ENCODE measurements at regions of chr3 and their contacts with region 1.

Region 1: DNA sequence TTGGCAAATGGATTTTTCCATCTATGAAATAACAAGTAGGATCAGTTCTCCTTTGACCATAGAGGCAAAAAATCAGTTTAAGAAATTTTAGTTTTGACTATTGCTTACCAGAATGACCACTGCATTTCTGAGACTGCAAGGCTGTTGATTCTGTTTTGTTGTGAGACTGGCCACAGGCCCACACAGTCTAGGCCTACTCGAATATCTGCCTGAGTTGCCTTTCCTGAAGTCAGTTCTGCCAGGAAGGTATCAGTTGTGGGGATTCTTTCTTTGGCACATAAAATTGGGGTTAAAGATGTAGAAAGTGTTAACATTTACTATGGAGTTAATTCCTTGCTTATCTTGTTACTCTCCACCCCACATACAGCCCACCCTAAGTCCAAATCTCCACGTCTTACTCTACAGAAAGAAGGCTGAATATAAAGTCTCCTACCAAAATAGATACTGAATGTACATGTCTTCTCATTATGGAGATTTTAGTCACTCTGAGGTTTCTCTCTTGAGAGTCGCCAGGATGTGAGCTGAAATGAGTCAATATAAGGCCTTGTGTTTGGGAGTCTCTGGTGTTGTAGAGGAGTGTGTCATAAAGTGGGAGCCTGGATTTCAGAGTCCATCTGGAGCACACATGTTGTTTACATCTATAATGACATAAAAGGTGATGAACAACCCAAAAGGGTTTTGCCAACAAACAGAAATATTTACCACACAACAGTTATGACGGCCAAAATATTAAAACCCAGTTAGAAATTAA is 45.0 kb upstream of the WWTR1 start:
- DNase-seq: peak; percentile 15
- ATAC-seq: peak; percentile 66
- H3K4me3 Mint-ChIP-seq: no peak overlapping the region
- H3K27ac Mint-ChIP-seq: peak overlapping the region; percentile 61
- H3K4me1 Mint-ChIP-seq: peaks cover 23% of the 10 kb centered on the region
- H3K27me3 Mint-ChIP-seq: no peaks in the 10 kb centered on the region

Region 2: DNA sequence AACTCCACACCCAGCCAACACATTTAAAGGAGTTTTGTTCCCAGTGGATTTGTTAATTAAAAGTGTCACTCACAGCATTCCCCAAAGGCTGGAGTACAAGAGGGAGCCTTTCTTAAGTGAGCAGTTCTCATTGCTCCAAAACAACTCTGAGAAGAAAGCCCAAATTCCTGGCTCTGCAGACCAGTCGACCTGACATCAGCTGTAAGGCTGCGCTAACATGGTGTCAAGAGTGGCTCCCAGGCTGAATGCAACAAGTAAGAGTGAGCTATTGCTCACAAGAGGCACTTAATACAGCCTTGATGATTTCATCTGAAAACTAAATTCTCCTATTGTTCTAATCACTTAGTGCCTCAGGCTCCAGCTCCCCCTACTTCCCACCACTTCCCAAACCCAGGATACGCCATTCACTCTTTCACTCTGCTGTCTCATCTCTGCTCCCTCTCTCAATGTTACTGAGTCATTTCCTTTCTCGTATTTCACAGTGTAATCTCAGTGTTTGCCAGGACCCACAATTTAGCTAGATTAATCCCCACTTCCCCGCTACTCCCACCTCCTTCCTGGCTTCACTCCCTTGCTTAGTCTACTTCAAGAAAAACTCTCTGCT is 126.8 kb before region 1 on chr3:
- CTCF ChIA-PET with region 1: no interaction called
- POLR2A ChIA-PET with region 1: no interaction called
- intact Hi-C with region 1: loop called (anchors 1 to 2 kb)
- DNase-seq: peak; percentile 19
- ATAC-seq: peak; percentile 54
- H3K4me3 Mint-ChIP-seq: no peak overlapping the region
- H3K27ac Mint-ChIP-seq: no peak overlapping the region
- H3K4me1 Mint-ChIP-seq: peaks cover 39% of the 10 kb centered on the region
- H3K27me3 Mint-ChIP-seq: peaks cover 3% of the 10 kb centered on the region

Region 3: GRCh38 chr3:149581681-149582370 is 121.0 kb before region 1 on chr3:
- CTCF ChIA-PET with region 1: no interaction called
- POLR2A ChIA-PET with region 1: no interaction called
- intact Hi-C with region 1: loop called in 1 of 2 experiments (anchors 2 kb)
- DNase-seq: peak; percentile 11
- ATAC-seq: no peak
- H3K4me3 Mint-ChIP-seq: no peak overlapping the region
- H3K27ac Mint-ChIP-seq: no peak overlapping the region
- H3K4me1 Mint-ChIP-seq: peaks cover 22% of the 10 kb centered on the region
- H3K27me3 Mint-ChIP-seq: peaks cover 22% of the 10 kb centered on the region

Region 4: GRCh38 chr3:149621218-149622005 is 81.5 kb before region 1 on chr3:
- CTCF ChIA-PET with region 1: no interaction called
- POLR2A ChIA-PET with region 1: no interaction called
- intact Hi-C with region 1: loop called (anchors 1 kb)
- DNase-seq: peak; percentile 11
- ATAC-seq: peak; percentile 73
- H3K4me3 Mint-ChIP-seq: no peak overlapping the region
- H3K27ac Mint-ChIP-seq: no peak overlapping the region
- H3K4me1 Mint-ChIP-seq: peaks cover 14% of the 10 kb centered on the region
- H3K27me3 Mint-ChIP-seq: peaks cover 16% of the 10 kb centered on the region

Region 5: GRCh38 chr3:149717391-149718056 is 14.7 kb after region 1 on chr3:
- CTCF ChIA-PET with region 1: interaction called, 11 read pairs
- POLR2A ChIA-PET with region 1: no interaction called
- intact Hi-C with region 1: no loop called
- DNase-seq: peak; percentile 49
- ATAC-seq: no peak
- H3K4me3 Mint-ChIP-seq: no peak overlapping the region
- H3K27ac Mint-ChIP-seq: no peak overlapping the region
- H3K4me1 Mint-ChIP-seq: no peaks in the 10 kb centered on the region
- H3K27me3 Mint-ChIP-seq: no peaks in the 10 kb centered on the region

Region 6: GRCh38 chr3:149726716-149727407 is 24.0 kb after region 1 on chr3:
- CTCF ChIA-PET with region 1: interaction called, 3 read pairs
- POLR2A ChIA-PET with region 1: no interaction called
- intact Hi-C with region 1: loop called in 1 of 2 experiments (anchors 2 kb)
- DNase-seq: peak; percentile 35
- ATAC-seq: peak; percentile 97
- H3K4me3 Mint-ChIP-seq: no peak overlapping the region
- H3K27ac Mint-ChIP-seq: no peak overlapping the region
- H3K4me1 Mint-ChIP-seq: peaks cover 5% of the 10 kb centered on the region
- H3K27me3 Mint-ChIP-seq: peaks cover 4% of the 10 kb centered on the region

Region 7: GRCh38 chr3:149738876-149739275 is 36.0 kb after region 1 on chr3:
- CTCF ChIA-PET with region 1: no interaction called
- POLR2A ChIA-PET with region 1: no interaction called
- intact Hi-C with region 1: no loop called
- DNase-seq: no peak
- ATAC-seq: peak; percentile 72
- H3K4me3 Mint-ChIP-seq: no peak overlapping the region
- H3K27ac Mint-ChIP-seq: no peak overlapping the region
- H3K4me1 Mint-ChIP-seq: peaks cover 3% of the 10 kb centered on the region
- H3K27me3 Mint-ChIP-seq: no peaks in the 10 kb centered on the region

Region 8: DNA sequence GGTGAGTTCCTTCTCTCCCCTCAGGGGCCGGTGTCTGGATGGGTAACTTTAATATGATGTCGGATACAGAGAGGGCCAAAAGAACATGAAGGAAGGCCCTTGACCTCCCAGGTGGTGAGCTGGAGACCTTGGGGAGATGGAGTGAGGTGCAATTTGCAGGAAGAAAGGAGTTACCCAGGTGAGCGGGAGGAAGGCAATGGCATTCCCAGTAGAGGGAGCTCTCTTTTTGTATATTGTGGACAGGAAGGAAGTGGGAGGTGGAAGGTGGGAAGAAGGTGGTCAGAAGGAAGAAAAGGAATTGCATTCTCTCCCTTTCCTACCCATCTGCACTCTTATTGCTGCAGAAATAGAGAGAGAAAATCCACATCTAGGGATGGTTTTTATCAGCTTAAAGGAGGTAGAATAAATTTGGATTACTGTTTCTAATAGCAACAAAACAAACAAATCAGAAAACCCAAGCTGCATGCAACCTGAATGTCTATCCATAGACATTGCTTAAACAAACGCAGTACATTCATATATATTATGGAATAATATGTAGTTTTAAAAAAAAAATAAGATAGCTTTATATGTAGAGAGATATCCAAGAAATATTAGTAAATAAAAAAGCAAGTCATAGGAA is 536.2 kb after region 1 on chr3:
- CTCF ChIA-PET with region 1: no interaction called
- POLR2A ChIA-PET with region 1: no interaction called
- intact Hi-C with region 1: no loop called
- DNase-seq: no peak
- ATAC-seq: no peak
- H3K4me3 Mint-ChIP-seq: no peak overlapping the region
- H3K27ac Mint-ChIP-seq: no peak overlapping the region
- H3K4me1 Mint-ChIP-seq: no peaks in the 10 kb centered on the region
- H3K27me3 Mint-ChIP-seq: peaks cover 3% of the 10 kb centered on the region

Region 9: DNA sequence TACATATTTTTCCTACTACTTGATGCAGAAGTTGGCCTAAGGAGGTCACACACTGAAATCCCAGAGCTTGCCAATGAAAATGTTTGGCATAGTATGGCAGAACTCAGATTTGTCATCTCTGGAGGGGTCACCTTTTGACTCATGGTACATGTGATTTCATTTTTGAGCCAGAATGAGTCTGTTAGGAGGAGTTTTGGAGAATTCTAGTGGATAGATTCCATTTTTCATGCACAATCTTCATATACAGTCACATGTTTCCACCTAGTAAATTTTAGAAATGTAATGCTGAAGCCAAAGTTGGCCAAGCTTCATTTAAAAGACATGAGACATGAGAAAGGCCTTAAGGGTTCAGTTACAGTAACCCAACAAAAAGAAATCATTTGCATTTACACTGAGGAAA is 1855.8 kb after region 1 on chr3:
- CTCF ChIA-PET with region 1: no interaction called
- POLR2A ChIA-PET with region 1: no interaction called
- intact Hi-C with region 1: no loop called
- DNase-seq: no peak
- ATAC-seq: no peak
- H3K4me3 Mint-ChIP-seq: no peak overlapping the region
- H3K27ac Mint-ChIP-seq: no peak overlapping the region
- H3K4me1 Mint-ChIP-seq: no peaks in the 10 kb centered on the region
- H3K27me3 Mint-ChIP-seq: no peaks in the 10 kb centered on the region

Measured in activated CD4-positive, alpha-beta T cell treated with anti-CD3 and anti-CD28 coated beads for 36 hours (primary cell).